Dorsolateral prefrontal cortex (tissue), 120 donors: ENCODE measurements at regions of chr3 and their contacts with region 1.

Region 1: GRCh38 chr3:188052169-188053030 is 101.6 kb upstream of the LPP start:
- DNase-seq: peak; percentile 76 to 99 (median 97)
- H3K4me3 ChIP-seq: peak overlapping the region in 42 of 59 donors; percentile 4 to 59 (median 40)
- H3K27ac ChIP-seq: peak overlapping the region; percentile 77 to 98 (median 93)
- H3K27me3 ChIP-seq: no peaks in the 10 kb centered on the region
- CTCF ChIP-seq: peak; percentile 35 to 88 (median 75)

Region 2: DNA sequence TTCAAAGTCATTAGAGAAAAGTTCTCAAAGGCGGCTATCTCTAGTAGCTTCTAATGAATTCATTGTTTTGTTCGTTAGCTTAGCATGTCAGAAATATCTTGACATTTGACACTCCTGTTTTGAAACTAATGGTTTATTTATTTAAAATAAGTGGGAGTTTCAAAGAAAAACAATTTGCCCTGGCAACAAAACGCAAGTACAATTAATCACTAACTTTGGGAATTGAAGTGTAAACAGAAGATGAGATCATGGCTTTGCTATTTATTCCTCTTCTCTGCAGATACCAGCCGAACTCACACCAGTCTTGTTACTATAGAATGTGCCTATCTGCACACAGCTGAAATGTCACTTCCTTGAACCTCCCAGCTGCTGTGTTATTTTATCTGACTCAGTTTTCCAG is 788.4 kb before region 1 on chr3:
- intact Hi-C with region 1: no loop called
- DNase-seq: no peak
- H3K4me3 ChIP-seq: no peak overlapping the region
- H3K27ac ChIP-seq: no peak overlapping the region
- H3K27me3 ChIP-seq: no peaks in the 10 kb centered on the region
- CTCF ChIP-seq: no peak

Region 3: DNA sequence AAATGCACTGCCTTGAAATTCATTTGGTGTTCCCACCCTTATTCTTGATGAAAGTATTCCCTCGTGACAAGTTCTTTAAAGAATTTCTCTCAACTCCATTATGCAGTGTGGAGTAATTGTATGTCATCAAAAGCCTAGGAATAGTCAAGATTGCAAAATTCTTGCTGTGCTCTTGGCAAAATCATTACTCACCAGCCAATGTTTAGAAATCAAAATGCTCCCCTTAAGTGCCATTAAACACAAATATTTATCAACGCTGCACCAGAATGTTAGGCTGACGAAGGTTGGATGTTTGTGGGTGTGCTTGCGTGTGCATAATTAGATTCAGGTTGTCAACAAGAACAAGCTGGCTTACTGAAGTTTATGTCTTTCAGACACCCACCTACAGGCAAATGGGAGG is 422.7 kb before region 1 on chr3:
- intact Hi-C with region 1: no loop called
- DNase-seq: no peak
- H3K4me3 ChIP-seq: no peak overlapping the region
- H3K27ac ChIP-seq: no peak overlapping the region
- H3K27me3 ChIP-seq: peaks cover 0 to 6% (median 0%) of the 10 kb centered on the region in 45 donors
- CTCF ChIP-seq: no peak

Region 4: GRCh38 chr3:187745201-187746058 is 307.0 kb before region 1 on chr3 and contains the start of gene BCL6:
- intact Hi-C with region 1: loop called (anchors 2 kb)
- DNase-seq: peak; percentile 82 to 92 (median 90)
- H3K4me3 ChIP-seq: peak within 1 kb of the TSS; percentile 55 to 98 (median 83)
- H3K27ac ChIP-seq: peak within 1 kb of the TSS; percentile 87 to 100 (median 99)
- H3K27me3 ChIP-seq: no peaks in the 10 kb centered on the region
- CTCF ChIP-seq: peak in 13 of 56 donors; percentile 1 to 27 (median 9)
- total RNA-seq, gene BCL6: 47.6 to 270 (median 94.0) TPM

Region 5: GRCh38 chr3:188262913-188263683 is 210.7 kb after region 1 on chr3:
- intact Hi-C with region 1: loop called in 1 of 2 experiments (anchors 5 kb)
- DNase-seq: peak in 6 of 10 donors; percentile 52 to 76 (median 60)
- H3K4me3 ChIP-seq: peak overlapping the region in 26 of 59 donors; percentile 2 to 50 (median 18)
- H3K27ac ChIP-seq: peak overlapping the region; percentile 27 to 95 (median 82)
- H3K27me3 ChIP-seq: no peaks in the 10 kb centered on the region
- CTCF ChIP-seq: peak in 18 of 56 donors; percentile 6 to 41 (median 20)

Region 6: GRCh38 chr3:188830893-188831292 is 778.5 kb after region 1 on chr3:
- intact Hi-C with region 1: loop called in 1 of 2 experiments (anchors 5 kb)
- DNase-seq: no peak
- H3K4me3 ChIP-seq: no peak overlapping the region
- H3K27ac ChIP-seq: no peak overlapping the region
- H3K27me3 ChIP-seq: no peaks in the 10 kb centered on the region
- CTCF ChIP-seq: peak in 12 of 56 donors; percentile 10 to 32 (median 18)

Region 7: DNA sequence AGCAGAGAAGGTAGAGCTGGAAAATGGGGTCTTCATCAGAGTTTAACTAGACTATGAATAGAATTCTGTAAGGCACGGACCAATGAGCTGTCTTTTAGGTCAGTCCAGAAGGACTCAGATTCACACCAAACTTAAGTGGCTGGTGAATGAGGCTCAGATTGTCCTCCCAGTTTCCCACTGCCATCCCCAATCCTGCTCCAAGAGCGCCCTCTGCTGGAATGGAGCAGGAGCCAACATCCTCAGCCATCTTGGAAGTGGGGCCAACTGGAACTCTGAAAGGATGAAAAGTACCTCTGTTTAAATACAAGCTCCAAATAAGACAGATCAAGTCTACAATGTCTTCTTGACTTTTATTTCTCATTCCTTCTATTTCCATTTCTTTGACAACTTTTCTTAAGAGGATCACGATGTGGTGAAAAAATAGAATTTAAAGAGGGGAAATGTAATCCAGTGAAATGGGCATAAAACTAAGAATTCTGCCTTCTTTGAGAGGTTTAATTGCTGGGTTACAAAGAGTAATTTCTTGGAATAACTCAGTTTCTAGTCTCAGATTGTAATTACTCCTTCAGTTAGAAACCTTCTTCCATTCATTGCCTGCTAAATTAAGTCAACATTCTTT is 902.3 kb after region 1 on chr3:
- intact Hi-C with region 1: loop called (anchors 1 to 2 kb)
- DNase-seq: peak; percentile 68 to 90 (median 84)
- H3K4me3 ChIP-seq: no peak overlapping the region
- H3K27ac ChIP-seq: peak overlapping the region in 45 of 59 donors; percentile 0 to 98 (median 51)
- H3K27me3 ChIP-seq: no peaks in the 10 kb centered on the region
- CTCF ChIP-seq: peak; percentile 82 to 99 (median 98)